ENCODE measurements at regions of chr15 and their contacts with region 1.

Region 1: DNA sequence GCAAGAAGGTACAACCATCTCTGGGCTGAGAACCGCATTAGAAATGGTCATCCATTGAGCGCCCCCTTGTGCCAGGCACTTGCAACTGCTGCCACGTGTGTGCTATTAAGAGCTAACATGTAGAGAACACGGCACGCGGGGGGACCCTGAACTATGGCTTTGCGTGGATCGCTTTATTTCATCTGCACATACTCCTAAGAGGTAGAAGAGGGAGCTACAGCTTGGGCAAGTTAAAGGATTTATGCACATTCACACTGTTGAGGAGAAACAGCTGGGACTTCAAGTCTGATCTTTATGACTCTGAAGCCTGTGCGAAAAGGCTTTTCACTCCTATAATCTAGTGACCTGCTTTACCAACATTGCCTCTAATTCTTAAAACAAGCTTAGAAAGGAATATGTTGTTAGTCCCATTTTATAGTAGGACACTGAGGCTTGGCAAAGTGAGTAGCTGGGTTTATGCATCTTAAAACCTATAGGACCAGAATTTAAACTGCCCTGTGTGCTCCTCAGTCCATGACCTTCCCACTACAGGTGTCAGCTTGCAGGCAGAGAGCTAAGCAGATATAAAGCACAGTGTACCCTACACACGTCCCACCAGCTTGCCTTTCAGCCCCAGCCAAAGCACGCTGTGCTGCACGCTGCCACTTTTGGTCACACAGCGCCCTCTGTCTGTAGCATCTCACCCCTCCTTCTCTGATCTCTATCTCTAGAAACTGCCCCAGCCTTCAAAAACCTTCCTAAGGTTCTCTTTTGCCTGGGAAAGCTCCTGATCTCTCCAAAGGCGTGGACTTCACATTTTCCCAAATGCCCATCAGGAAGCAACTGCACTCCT is 57.8 kb downstream of the STARD5 start:
- DNase-seq: peak; percentile 61
- H3K4me3 ChIP-seq: no peak overlapping the region
- H3K27ac ChIP-seq: no peak overlapping the region
- H3K27me3 ChIP-seq: peaks cover 2% of the 10 kb centered on the region
- CTCF ChIP-seq: peak; percentile 95

Region 2: GRCh38 chr15:80844011-80844755 is 422.0 kb before region 1 on chr15:
- CTCF ChIA-PET with region 1: no interaction called
- POLR2A ChIA-PET with region 1: no interaction called
- DNase-seq: peak; percentile 20
- H3K4me3 ChIP-seq: no peak overlapping the region
- H3K27ac ChIP-seq: peak overlapping the region; percentile 11
- H3K27me3 ChIP-seq: peaks cover 15% of the 10 kb centered on the region
- CTCF ChIP-seq: no peak

Region 3: DNA sequence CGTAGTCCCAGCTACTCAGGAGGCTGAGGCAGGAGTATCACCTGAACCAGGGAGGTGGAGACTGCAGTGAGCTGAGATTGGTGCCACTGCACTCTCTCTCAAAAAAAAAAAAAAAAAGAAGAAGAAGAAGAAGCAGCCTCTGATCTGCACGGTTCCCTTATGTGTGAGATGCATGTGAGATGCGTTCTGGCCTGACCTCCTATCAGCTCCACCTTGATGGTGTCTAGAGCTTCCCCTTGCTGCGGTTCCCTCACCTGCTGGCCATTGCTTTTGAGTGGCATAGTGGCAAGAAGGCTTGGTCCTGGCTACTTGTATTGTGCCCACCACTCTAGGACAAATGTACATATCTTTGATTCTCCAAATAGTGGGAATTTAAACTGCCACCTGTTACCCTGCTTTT is 181.4 kb before region 1 on chr15:
- CTCF ChIA-PET with region 1: interaction called, 10 read pairs
- POLR2A ChIA-PET with region 1: no interaction called
- DNase-seq: no peak
- H3K4me3 ChIP-seq: no peak overlapping the region
- H3K27ac ChIP-seq: no peak overlapping the region
- H3K27me3 ChIP-seq: peaks cover 14% of the 10 kb centered on the region
- CTCF ChIP-seq: no peak

Region 4: DNA sequence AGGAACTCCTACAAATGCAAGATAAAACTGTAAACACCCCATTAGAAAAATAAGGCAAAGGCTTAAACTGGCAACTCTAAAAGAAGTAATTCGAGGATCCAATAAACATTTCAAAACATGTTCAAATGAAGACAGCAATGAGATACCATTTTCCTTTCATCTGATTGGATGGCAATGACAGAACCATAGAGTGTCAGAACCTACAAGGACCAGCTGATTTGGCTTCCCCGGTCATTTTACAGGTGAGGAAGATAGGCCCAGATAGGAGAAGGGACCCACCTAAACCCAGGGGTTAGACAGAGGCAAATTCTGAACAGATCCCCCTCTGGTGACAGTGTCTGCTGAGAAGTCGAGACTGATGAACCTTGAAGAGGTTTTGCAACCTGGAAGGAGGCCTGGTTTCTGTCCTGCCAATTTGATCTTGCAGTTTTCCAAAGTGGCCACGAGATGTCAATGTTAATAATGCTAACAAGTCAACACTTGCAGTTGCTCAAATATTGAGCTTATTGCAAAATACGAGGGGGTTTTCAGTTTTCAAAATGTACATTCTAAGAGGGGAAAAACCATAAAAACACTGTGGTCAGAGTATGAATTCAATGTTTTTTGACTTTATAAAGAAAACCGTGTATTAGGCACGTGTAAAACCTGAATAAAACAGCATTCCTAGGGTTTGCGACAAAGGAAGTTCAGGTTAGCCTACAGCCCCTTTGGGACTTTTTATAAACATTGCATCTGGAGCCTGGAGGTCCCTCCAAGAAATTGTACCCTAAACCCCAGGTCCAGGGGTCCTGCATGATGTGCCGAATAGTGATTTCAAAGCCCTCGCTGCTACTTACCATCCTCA is 110.6 kb before region 1 on chr15:
- CTCF ChIA-PET with region 1: interaction called, 477 read pairs
- POLR2A ChIA-PET with region 1: interaction called, 6 read pairs
- DNase-seq: peak; percentile 46
- H3K4me3 ChIP-seq: no peak overlapping the region
- H3K27ac ChIP-seq: no peak overlapping the region
- H3K27me3 ChIP-seq: no peaks in the 10 kb centered on the region
- CTCF ChIP-seq: peak; percentile 77

Region 5: GRCh38 chr15:81199031-81199779 is 67.0 kb before region 1 on chr15:
- CTCF ChIA-PET with region 1: interaction called, 48 read pairs
- POLR2A ChIA-PET with region 1: no interaction called
- DNase-seq: no peak
- H3K4me3 ChIP-seq: no peak overlapping the region
- H3K27ac ChIP-seq: no peak overlapping the region
- H3K27me3 ChIP-seq: no peaks in the 10 kb centered on the region
- CTCF ChIP-seq: no peak

Region 6: DNA sequence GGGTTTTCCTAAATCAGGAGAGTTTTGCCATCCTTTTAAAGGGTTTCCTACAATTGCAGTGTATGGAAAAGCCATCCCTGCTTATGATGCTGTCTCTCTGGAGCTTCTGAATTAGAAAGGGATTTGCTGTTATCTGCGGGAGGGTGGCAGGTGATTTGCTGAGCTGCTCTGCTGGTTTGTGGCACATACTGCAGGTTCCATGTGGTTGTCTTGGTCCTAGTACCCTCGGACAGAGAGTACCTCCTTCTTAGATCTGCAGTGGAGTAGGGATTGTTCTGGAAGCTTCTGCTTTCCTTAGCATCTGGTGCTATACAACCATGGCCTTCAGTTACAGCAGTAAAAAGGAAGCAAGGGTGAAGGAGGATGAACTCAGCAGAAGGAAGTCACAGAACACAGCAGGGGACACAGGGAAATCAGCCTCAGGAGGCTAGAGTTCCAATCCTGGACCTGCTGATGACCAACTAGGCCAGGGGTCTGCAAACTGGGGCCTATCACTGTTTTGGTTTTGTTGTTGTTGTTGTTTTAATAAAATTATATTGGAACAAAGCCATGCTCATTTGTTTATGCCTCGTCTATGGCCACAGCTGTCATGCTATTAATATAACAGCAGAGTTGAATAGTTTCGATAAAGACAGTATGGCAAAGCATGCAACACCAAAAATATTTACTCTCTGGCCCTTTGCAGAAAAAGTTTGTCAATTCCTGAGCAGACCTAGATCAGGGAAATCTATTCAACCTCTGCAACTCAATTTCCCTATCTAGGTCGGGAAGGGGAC is 18.3 kb after region 1 on chr15:
- CTCF ChIA-PET with region 1: interaction called, 46 read pairs
- POLR2A ChIA-PET with region 1: no interaction called
- DNase-seq: no peak
- H3K4me3 ChIP-seq: no peak overlapping the region
- H3K27ac ChIP-seq: no peak overlapping the region
- H3K27me3 ChIP-seq: peaks cover 3% of the 10 kb centered on the region
- CTCF ChIP-seq: no peak

Region 7: GRCh38 chr15:81386947-81387346 is 120.8 kb after region 1 on chr15:
- CTCF ChIA-PET with region 1: interaction called, 19 read pairs
- POLR2A ChIA-PET with region 1: no interaction called
- DNase-seq: no peak
- H3K4me3 ChIP-seq: no peak overlapping the region
- H3K27ac ChIP-seq: no peak overlapping the region
- H3K27me3 ChIP-seq: no peaks in the 10 kb centered on the region
- CTCF ChIP-seq: no peak

Measured in AG04450 (cell line).